Activated CD4-positive, alpha-beta memory T cell treated with anti-CD3 and anti-CD28 coated beads for 36 hours (primary cell): ENCODE measurements at regions of chr14 and their contacts with region 1.

Region 1: DNA sequence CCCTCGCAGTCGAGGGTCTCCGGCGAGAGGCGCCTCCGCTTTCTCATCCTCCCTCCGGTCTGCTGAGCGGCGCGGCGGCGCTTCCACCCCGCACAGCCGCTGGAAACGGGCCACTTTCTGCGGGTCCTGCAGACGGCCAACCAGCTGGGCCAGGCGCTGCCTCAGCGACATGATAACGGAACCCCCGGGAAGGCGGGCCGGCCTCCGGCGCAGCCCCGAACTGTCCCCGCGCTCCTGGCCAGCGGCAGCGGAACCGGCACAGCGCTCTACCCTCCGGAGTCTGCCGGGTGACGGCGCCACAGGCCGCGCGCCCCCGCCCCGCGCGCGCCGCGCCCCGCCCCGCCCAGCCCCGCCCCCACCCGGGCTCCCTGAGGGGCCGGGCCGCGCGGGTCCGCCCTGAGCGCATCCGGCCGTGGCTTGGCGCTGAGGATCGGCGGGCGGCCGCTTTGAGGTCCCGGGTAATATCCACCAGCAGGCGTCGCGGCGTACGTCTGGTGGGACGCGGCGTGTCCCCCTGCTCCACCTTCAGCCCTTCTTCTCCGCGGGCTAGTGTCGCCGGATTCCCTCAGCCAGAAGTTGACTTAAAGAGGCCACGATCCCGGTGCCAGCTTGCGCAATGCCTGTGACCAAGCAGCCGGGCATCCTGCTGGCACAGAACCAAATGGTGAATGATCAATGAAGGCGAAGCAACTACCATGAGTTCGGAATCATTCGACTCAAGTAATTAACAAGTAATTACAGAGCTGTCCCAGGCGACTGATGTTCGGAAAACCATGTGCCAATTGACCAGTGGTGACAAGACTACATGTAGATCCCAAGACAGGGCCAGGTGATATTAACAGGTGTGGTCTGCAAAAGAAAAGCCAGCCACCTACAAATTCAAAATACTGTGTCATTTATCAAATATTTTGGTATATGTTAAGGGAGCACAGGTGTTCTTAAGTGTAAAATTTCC is at the start of gene SGPP1:
- DNase-seq: peak; percentile 86
- H3K4me3 Mint-ChIP-seq: peak within 1 kb of the TSS; percentile 98
- H3K27ac Mint-ChIP-seq: peak within 1 kb of the TSS; percentile 86
- H3K4me1 Mint-ChIP-seq: peaks cover 25% of the 10 kb centered on the region
- H3K27me3 Mint-ChIP-seq: no peaks in the 10 kb centered on the region
- total RNA-seq, gene SGPP1: 10.5 to 11.3 TPM

Region 2: GRCh38 chr14:63322897-63323573 is 405.0 kb before region 1 on chr14:
- CTCF ChIA-PET with region 1: no interaction called
- POLR2A ChIA-PET with region 1: no interaction called
- intact Hi-C with region 1: no loop called
- DNase-seq: no peak
- H3K4me3 Mint-ChIP-seq: no peak overlapping the region
- H3K27ac Mint-ChIP-seq: no peak overlapping the region
- H3K4me1 Mint-ChIP-seq: no peaks in the 10 kb centered on the region
- H3K27me3 Mint-ChIP-seq: peaks cover 10% of the 10 kb centered on the region

Region 3: DNA sequence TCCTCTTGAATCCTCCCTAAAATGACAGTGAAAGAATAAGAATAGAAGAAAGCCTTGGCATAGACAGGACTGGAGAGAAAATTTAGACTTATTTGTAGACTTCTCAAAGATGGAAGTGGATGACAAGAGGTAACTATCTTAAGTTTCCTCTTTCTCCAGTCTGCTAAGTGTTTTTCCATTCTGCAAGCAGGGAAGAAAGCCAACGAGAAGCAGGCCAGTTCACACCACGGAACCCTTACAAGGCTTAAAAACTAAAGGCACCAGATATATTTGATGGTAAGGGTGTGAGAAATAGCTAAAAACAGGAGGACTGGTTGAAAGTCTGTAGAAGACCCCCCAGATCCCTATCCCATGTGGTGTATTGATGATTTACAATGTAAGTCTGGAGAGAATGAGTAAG is 326.4 kb before region 1 on chr14:
- CTCF ChIA-PET with region 1: no interaction called
- POLR2A ChIA-PET with region 1: no interaction called
- intact Hi-C with region 1: no loop called
- DNase-seq: no peak
- H3K4me3 Mint-ChIP-seq: no peak overlapping the region
- H3K27ac Mint-ChIP-seq: no peak overlapping the region
- H3K4me1 Mint-ChIP-seq: peaks cover 12% of the 10 kb centered on the region
- H3K27me3 Mint-ChIP-seq: no peaks in the 10 kb centered on the region

Region 4: GRCh38 chr14:63543000-63543825 is 184.8 kb before region 1 on chr14 and contains the start of gene PPP2R5E:
- CTCF ChIA-PET with region 1: interaction called, 3 read pairs
- POLR2A ChIA-PET with region 1: no interaction called
- intact Hi-C with region 1: loop called (anchors 2 kb)
- DNase-seq: peak; percentile 99
- H3K4me3 Mint-ChIP-seq: peak within 1 kb of the TSS; percentile 82
- H3K27ac Mint-ChIP-seq: peak within 1 kb of the TSS; percentile 86
- H3K4me1 Mint-ChIP-seq: peaks cover 31% of the 10 kb centered on the region
- H3K27me3 Mint-ChIP-seq: no peaks in the 10 kb centered on the region
- total RNA-seq, gene PPP2R5E: 37.7 to 37.8 TPM

Region 5: DNA sequence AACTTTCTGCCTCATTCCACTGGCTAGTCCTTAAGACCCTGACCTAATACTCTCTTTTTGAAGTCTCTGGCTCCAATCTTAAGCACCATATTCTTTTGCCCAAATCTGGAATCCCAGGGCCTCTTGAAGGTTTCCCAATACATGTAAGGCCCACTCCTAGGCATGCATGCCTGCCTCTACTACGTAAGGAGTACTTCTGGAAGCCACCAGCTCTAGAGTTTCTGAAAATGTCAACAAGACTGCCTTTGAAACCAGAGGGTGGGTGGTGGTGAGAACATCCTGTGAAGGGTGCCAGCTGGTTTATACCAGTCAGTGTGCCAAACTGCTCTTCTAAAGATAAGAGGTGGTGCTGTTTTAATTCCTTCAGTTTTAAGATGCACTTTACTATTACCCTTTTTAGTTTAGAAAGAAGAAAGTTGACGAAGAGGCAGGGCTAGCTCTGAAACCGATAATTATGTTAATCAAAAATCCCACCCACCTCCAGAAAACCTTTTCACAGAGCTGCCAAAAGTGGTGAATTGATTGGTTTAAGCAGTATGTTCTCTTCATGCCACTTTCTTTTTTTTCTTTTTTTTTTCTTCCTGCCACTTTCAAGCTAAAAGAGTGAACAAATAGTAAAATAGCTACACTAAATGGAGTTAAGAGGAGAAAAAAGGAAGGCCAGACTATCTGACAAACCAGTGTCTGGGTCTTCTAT is 77.6 kb before region 1 on chr14:
- CTCF ChIA-PET with region 1: interaction called, 4 read pairs
- POLR2A ChIA-PET with region 1: no interaction called
- intact Hi-C with region 1: loop called (anchors 2 kb)
- DNase-seq: peak; percentile 75
- H3K4me3 Mint-ChIP-seq: peak overlapping the region; percentile 46
- H3K27ac Mint-ChIP-seq: peak overlapping the region; percentile 93
- H3K4me1 Mint-ChIP-seq: peaks cover 40% of the 10 kb centered on the region
- H3K27me3 Mint-ChIP-seq: no peaks in the 10 kb centered on the region

Region 6: GRCh38 chr14:63672417-63673180 is 55.5 kb before region 1 on chr14:
- CTCF ChIA-PET with region 1: no interaction called
- POLR2A ChIA-PET with region 1: no interaction called
- intact Hi-C with region 1: no loop called
- DNase-seq: no peak
- H3K4me3 Mint-ChIP-seq: no peak overlapping the region
- H3K27ac Mint-ChIP-seq: no peak overlapping the region
- H3K4me1 Mint-ChIP-seq: no peaks in the 10 kb centered on the region
- H3K27me3 Mint-ChIP-seq: no peaks in the 10 kb centered on the region

Region 7: GRCh38 chr14:63713765-63714164 is 14.3 kb before region 1 on chr14:
- CTCF ChIA-PET with region 1: interaction called, 4 read pairs
- POLR2A ChIA-PET with region 1: no interaction called
- intact Hi-C with region 1: loop called (anchors 2 kb)
- DNase-seq: no peak
- H3K4me3 Mint-ChIP-seq: no peak overlapping the region
- H3K27ac Mint-ChIP-seq: no peak overlapping the region
- H3K4me1 Mint-ChIP-seq: peaks cover 20% of the 10 kb centered on the region
- H3K27me3 Mint-ChIP-seq: no peaks in the 10 kb centered on the region

Region 8: GRCh38 chr14:63760014-63760413 is 32.0 kb after region 1 on chr14:
- CTCF ChIA-PET with region 1: no interaction called
- POLR2A ChIA-PET with region 1: no interaction called
- intact Hi-C with region 1: loop called (anchors 5 kb)
- DNase-seq: no peak
- H3K4me3 Mint-ChIP-seq: no peak overlapping the region
- H3K27ac Mint-ChIP-seq: no peak overlapping the region
- H3K4me1 Mint-ChIP-seq: peaks cover 10% of the 10 kb centered on the region
- H3K27me3 Mint-ChIP-seq: no peaks in the 10 kb centered on the region

Region 9: GRCh38 chr14:63770187-63770807 is 42.2 kb after region 1 on chr14:
- CTCF ChIA-PET with region 1: interaction called, 10 read pairs
- POLR2A ChIA-PET with region 1: no interaction called
- intact Hi-C with region 1: no loop called
- DNase-seq: peak; percentile 54
- H3K4me3 Mint-ChIP-seq: no peak overlapping the region
- H3K27ac Mint-ChIP-seq: no peak overlapping the region
- H3K4me1 Mint-ChIP-seq: peaks cover 2% of the 10 kb centered on the region
- H3K27me3 Mint-ChIP-seq: no peaks in the 10 kb centered on the region